ENCODE measurements at regions of chr7 and their contacts with region 1.

Region 1: GRCh38 chr7:37916673-37917660 is at the start of gene SFRP4:
- DNase-seq: peak; percentile 35
- H3K4me3 ChIP-seq: peak within 1 kb of the TSS; percentile 14 to 47 (median 31)
- H3K27ac ChIP-seq: peak within 1 kb of the TSS; percentile 6 to 58 (median 36)
- H3K4me1 ChIP-seq: peaks cover 0 to 32% (median 18%) of the 10 kb centered on the region in 4 donors
- H3K27me3 ChIP-seq: peaks cover 18% of the 10 kb centered on the region
- CTCF ChIP-seq: peak; percentile 63 to 76 (median 65)
- EP300 ChIP-seq: no peak
- POLR2A ChIP-seq: no peak
- total RNA-seq, gene SFRP4: 0.41 to 1.8 (median 0.64) TPM in 3 of 4 donors, not detected in the other

Region 2: DNA sequence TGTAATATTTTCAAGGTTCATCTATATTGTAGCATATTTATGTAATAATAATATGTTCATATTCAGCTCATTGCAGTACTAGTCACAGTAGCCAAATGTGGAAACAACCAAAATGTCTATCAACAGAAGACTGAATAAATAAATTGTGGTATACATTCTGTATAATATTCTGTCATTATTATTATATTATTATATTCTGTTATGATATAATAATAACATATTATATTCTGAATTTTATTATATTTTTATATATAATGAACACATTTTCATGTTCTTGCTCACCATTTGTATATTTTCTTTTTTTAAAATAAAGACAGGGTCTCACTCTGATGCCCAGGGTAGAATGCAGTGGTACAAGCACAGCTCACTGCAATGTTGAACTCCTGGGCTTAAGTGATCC is 169.9 kb after region 1 on chr7:
- in situ Hi-C with region 1: loop called in 3 of 4 experiments (anchors 25 kb)
- intact Hi-C with region 1: no loop called
- DNase-seq: no peak
- H3K4me3 ChIP-seq: no peak overlapping the region
- H3K27ac ChIP-seq: no peak overlapping the region
- H3K4me1 ChIP-seq: no peaks in the 10 kb centered on the region
- H3K27me3 ChIP-seq: no peaks in the 10 kb centered on the region
- CTCF ChIP-seq: no peak
- EP300 ChIP-seq: no peak
- POLR2A ChIP-seq: no peak

Region 3: GRCh38 chr7:38215735-38216670 is 299.0 kb after region 1 on chr7:
- in situ Hi-C with region 1: loop called in 3 of 4 experiments (anchors 10 to 25 kb)
- intact Hi-C with region 1: no loop called
- DNase-seq: peak; percentile 85
- H3K4me3 ChIP-seq: no peak overlapping the region
- H3K27ac ChIP-seq: peak overlapping the region; percentile 35 to 65 (median 54)
- H3K4me1 ChIP-seq: peaks cover 10 to 26% (median 12%) of the 10 kb centered on the region in 4 donors
- H3K27me3 ChIP-seq: no peaks in the 10 kb centered on the region
- CTCF ChIP-seq: peak; percentile 86 to 97 (median 90)
- EP300 ChIP-seq: no peak
- POLR2A ChIP-seq: no peak

Region 4: DNA sequence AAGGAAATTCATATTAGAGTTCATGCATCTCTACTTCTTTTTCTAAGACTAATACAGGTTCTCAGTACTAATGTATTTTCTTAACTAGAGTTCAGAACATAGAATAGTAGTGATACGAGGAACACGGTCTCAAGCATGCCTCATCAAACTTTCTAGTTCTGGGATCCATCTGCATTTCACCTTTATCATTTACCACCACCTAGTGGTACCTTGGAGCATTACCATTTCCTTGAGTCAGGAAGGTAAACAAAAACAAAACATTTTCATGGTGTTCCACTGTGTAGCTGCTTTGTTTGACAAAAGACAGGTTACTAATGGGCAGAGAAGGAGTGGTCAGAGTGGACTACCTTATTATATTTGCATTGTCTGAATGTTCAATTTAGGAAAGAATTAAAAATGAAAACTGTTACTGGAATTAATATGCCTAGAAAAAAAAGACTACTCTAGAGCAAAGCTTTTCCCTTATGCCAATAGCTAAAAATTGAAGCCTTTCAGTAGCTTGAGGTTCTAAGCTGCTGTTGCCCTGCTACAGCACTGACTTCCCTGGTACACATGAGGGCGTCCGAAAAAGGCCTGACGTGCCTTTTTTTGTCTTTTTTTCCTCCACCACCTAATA is 305.6 kb after region 1 on chr7:
- in situ Hi-C with region 1: loop called in 3 of 4 experiments (anchors 10 to 25 kb)
- intact Hi-C with region 1: no loop called
- DNase-seq: no peak
- H3K4me3 ChIP-seq: no peak overlapping the region
- H3K27ac ChIP-seq: peak overlapping the region in 1 of 4 donors; percentile 25
- H3K4me1 ChIP-seq: no peaks in the 10 kb centered on the region
- H3K27me3 ChIP-seq: no peaks in the 10 kb centered on the region
- CTCF ChIP-seq: peak; percentile 85 to 94 (median 91)
- EP300 ChIP-seq: no peak
- POLR2A ChIP-seq: no peak